ENCODE measurements at regions of chr5 and their contacts with region 1.

Region 1: DNA sequence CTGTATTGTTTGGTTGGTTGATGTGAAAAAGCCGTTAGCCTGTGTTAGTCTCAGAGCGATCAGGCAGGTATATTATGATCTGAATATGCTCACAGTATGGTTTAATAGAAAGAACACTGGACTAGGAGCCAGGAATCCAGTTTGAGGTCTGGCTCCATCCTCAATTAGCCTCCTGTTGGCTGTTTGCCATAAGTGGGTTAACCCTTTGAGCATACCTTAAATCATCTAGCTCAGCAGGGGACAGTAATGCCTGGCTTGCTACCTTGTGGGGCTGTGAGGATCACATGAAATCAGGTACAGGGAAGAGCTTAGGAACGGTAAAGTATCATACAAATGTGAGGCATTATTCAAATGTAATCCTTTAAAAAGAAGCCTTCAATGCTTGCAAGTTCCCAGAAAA is 104.7 kb downstream of the CMYA5 start:
- DNase-seq: no peak
- H3K4me3 ChIP-seq: no peak overlapping the region
- H3K4me3 Mint-ChIP-seq: no peak overlapping the region
- H3K27ac Mint-ChIP-seq: no peak overlapping the region
- H3K4me1 ChIP-seq: no peaks in the 10 kb centered on the region
- H3K4me1 Mint-ChIP-seq: no peaks in the 10 kb centered on the region
- H3K27me3 ChIP-seq: no peaks in the 10 kb centered on the region
- H3K27me3 Mint-ChIP-seq: no peaks in the 10 kb centered on the region
- CTCF ChIP-seq: no peak

Region 2: GRCh38 chr5:79806741-79807140 is 12.4 kb after region 1 on chr5:
- CTCF ChIA-PET with region 1: no interaction called
- POLR2A ChIA-PET with region 1: no interaction called
- intact Hi-C with region 1: no loop called
- DNase-seq: no peak
- H3K4me3 ChIP-seq: no peak overlapping the region
- H3K4me3 Mint-ChIP-seq: no peak overlapping the region
- H3K27ac Mint-ChIP-seq: no peak overlapping the region
- H3K4me1 ChIP-seq: no peaks in the 10 kb centered on the region
- H3K4me1 Mint-ChIP-seq: no peaks in the 10 kb centered on the region
- H3K27me3 ChIP-seq: no peaks in the 10 kb centered on the region
- H3K27me3 Mint-ChIP-seq: no peaks in the 10 kb centered on the region
- CTCF ChIP-seq: no peak

Region 3: DNA sequence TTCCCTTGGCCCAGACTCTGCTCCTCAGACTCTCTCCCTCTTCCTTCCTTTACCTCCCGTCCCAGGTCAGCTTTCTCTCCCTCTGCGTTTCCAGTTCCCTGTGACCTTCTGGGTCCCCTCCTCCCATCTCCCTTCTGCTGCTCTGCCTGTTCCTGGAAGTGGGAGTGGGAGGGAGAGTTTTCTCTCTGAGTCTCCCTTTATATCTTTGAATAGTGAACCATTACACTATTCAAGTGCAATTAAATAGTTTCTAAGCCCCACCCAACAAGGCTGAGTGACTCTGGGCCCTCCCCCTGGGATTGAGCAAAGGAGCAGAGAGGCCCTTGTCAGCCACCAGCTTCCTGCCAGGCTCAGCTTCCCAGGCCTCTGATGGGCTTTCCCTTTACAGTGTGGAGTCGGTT is 275.6 kb after region 1 on chr5:
- CTCF ChIA-PET with region 1: interaction called, 10 read pairs
- POLR2A ChIA-PET with region 1: no interaction called
- intact Hi-C with region 1: no loop called
- DNase-seq: no peak
- H3K4me3 ChIP-seq: no peak overlapping the region
- H3K4me3 Mint-ChIP-seq: no peak overlapping the region
- H3K27ac Mint-ChIP-seq: no peak overlapping the region
- H3K4me1 ChIP-seq: no peaks in the 10 kb centered on the region
- H3K4me1 Mint-ChIP-seq: no peaks in the 10 kb centered on the region
- H3K27me3 ChIP-seq: no peaks in the 10 kb centered on the region
- H3K27me3 Mint-ChIP-seq: no peaks in the 10 kb centered on the region
- CTCF ChIP-seq: no peak

Measured in Caco-2 (cell line).